Activated B cell treated with CpG ODN at 0.5 μM for 24 hours (primary cell): ENCODE measurements at regions of chr21 and their contacts with region 1.

Region 1: DNA sequence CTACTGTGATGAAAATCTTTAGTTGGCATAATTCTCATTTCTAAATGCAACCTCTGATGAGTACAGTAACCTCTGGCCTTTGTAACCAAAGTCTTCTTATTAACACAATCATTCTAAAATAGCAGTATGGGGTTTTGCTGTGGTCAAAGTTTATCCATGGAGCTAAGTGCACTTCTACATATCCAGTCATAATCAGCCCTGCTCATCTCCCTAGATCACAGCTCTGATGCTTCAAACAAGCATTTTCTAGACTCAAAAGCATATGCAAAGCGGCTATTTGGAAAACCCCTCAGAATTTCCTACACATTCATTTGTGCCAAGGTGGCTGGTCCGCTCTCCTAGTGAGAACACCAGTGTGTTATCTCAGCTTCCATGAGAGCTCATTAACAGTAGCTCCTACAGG is 418.6 kb downstream of the MRPL39 start:
- DNase-seq: no peak
- ATAC-seq: peak; percentile 72
- H3K4me3 Mint-ChIP-seq: peak overlapping the region; percentile 44
- H3K27ac Mint-ChIP-seq: peak overlapping the region; percentile 73
- H3K4me1 Mint-ChIP-seq: peaks cover 68% of the 10 kb centered on the region
- H3K27me3 Mint-ChIP-seq: no peaks in the 10 kb centered on the region
- CTCF ChIP-seq: no peak

Region 2: GRCh38 chr21:25199944-25200343 is 11.3 kb after region 1 on chr21:
- CTCF ChIA-PET with region 1: no interaction called
- POLR2A ChIA-PET with region 1: interaction called, 3 read pairs
- intact Hi-C with region 1: loop called (anchors 1 kb)
- DNase-seq: no peak
- ATAC-seq: no peak
- H3K4me3 Mint-ChIP-seq: no peak overlapping the region
- H3K27ac Mint-ChIP-seq: no peak overlapping the region
- H3K4me1 Mint-ChIP-seq: peaks cover 12% of the 10 kb centered on the region
- H3K27me3 Mint-ChIP-seq: no peaks in the 10 kb centered on the region
- CTCF ChIP-seq: no peak

Region 3: GRCh38 chr21:25215698-25216384 is 27.2 kb after region 1 on chr21:
- CTCF ChIA-PET with region 1: interaction called, 5 read pairs
- POLR2A ChIA-PET with region 1: interaction called, 3 read pairs
- intact Hi-C with region 1: loop called (anchors 2 kb)
- DNase-seq: no peak
- ATAC-seq: peak; percentile 90
- H3K4me3 Mint-ChIP-seq: peak overlapping the region; percentile 35
- H3K27ac Mint-ChIP-seq: peak overlapping the region; percentile 42
- H3K4me1 Mint-ChIP-seq: peaks cover 31% of the 10 kb centered on the region
- H3K27me3 Mint-ChIP-seq: no peaks in the 10 kb centered on the region
- CTCF ChIP-seq: no peak

Region 4: DNA sequence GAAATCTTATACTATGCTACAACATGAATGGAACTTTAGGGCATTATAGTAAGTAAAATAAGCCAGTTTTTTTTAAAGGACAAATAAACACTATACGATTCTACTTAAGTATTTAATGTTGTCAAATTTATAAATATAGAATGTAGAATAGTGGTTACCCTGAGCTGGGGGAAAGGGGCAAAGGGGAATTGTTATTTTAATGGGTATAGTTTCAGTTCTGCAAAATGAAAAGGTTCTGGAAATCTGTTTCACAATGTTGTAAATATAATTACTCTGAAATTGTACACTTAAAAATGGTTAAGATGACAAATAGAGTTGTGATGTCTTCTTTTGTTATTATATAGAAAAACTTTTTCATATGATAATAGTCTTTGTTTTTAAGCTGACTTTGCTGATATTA is 52.3 kb after region 1 on chr21:
- CTCF ChIA-PET with region 1: no interaction called
- POLR2A ChIA-PET with region 1: interaction called, 3 read pairs
- intact Hi-C with region 1: loop called (anchors 2 kb)
- DNase-seq: no peak
- ATAC-seq: no peak
- H3K4me3 Mint-ChIP-seq: no peak overlapping the region
- H3K27ac Mint-ChIP-seq: no peak overlapping the region
- H3K4me1 Mint-ChIP-seq: peaks cover 43% of the 10 kb centered on the region
- H3K27me3 Mint-ChIP-seq: no peaks in the 10 kb centered on the region
- CTCF ChIP-seq: no peak

Region 5: DNA sequence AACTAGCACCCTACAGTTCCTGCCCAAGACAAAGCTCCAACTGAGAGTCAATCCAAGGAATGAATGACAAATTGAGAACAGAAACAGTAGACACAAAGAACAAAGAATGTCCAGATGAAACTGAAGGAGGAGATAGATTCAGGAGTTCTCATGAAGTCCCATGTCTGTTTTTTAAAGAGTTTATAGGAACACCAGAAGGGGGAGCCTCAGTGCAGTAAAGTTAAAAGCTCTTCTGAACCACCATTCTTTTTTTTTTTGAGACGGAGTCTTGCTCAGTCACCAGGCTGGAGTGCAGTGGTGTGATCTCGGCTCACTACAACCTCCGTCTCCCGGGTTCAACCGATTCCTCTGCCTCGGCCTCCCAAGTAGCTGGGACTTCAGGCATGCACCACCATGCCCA is 95.0 kb after region 1 on chr21:
- CTCF ChIA-PET with region 1: no interaction called
- POLR2A ChIA-PET with region 1: no interaction called
- intact Hi-C with region 1: no loop called
- DNase-seq: no peak
- ATAC-seq: no peak
- H3K4me3 Mint-ChIP-seq: no peak overlapping the region
- H3K27ac Mint-ChIP-seq: no peak overlapping the region
- H3K4me1 Mint-ChIP-seq: peaks cover 11% of the 10 kb centered on the region
- H3K27me3 Mint-ChIP-seq: no peaks in the 10 kb centered on the region
- CTCF ChIP-seq: no peak

Region 6: GRCh38 chr21:25307489-25307888 is 118.8 kb after region 1 on chr21:
- CTCF ChIA-PET with region 1: interaction called, 3 read pairs
- POLR2A ChIA-PET with region 1: no interaction called
- intact Hi-C with region 1: loop called (anchors 10 kb)
- DNase-seq: no peak
- ATAC-seq: no peak
- H3K4me3 Mint-ChIP-seq: no peak overlapping the region
- H3K27ac Mint-ChIP-seq: no peak overlapping the region
- H3K4me1 Mint-ChIP-seq: no peaks in the 10 kb centered on the region
- H3K27me3 Mint-ChIP-seq: no peaks in the 10 kb centered on the region
- CTCF ChIP-seq: no peak

Region 7: DNA sequence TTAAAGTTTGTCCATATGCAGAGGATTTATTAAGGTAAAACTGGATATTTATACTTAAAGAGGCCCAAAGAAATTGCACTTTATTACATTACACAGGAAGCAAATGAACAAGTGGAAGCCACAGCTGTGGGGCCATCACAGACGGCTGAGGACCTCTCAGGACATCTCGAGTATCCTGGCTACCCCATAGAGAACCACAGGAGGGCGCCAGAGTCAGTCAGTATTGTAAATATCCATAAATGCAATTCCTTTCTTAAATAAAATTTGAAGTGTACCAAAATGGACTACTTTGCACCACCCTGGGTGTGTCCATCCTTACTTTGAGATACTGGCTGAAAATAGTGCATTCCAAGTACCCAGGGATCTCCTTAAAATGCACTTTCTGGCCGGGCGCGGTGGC is 161.4 kb after region 1 on chr21:
- CTCF ChIA-PET with region 1: no interaction called
- POLR2A ChIA-PET with region 1: no interaction called
- intact Hi-C with region 1: no loop called
- DNase-seq: no peak
- ATAC-seq: no peak
- H3K4me3 Mint-ChIP-seq: no peak overlapping the region
- H3K27ac Mint-ChIP-seq: no peak overlapping the region
- H3K4me1 Mint-ChIP-seq: peaks cover 4% of the 10 kb centered on the region
- H3K27me3 Mint-ChIP-seq: no peaks in the 10 kb centered on the region
- CTCF ChIP-seq: no peak